ENCODE measurements at regions of chr14 and their contacts with region 1.

Region 1: GRCh38 chr14:54881235-54881760 is 21.3 kb downstream of the GCH1 start:
- DNase-seq: peak; percentile 34
- ATAC-seq: peak; percentile 71
- H3K4me3 Mint-ChIP-seq: peak overlapping the region; percentile 83
- H3K27ac Mint-ChIP-seq: peak overlapping the region; percentile 100
- H3K4me1 Mint-ChIP-seq: peaks cover 39% of the 10 kb centered on the region
- H3K27me3 Mint-ChIP-seq: no peaks in the 10 kb centered on the region

Region 2: GRCh38 chr14:54893151-54893760 is 12.0 kb after region 1 on chr14:
- CTCF ChIA-PET with region 1: interaction called, 42 read pairs
- POLR2A ChIA-PET with region 1: interaction called, 4 read pairs
- intact Hi-C with region 1: loop called (anchors 1 kb)
- DNase-seq: peak; percentile 59
- ATAC-seq: peak; percentile 77
- H3K4me3 Mint-ChIP-seq: no peak overlapping the region
- H3K27ac Mint-ChIP-seq: peak overlapping the region; percentile 13
- H3K4me1 Mint-ChIP-seq: peaks cover 57% of the 10 kb centered on the region
- H3K27me3 Mint-ChIP-seq: no peaks in the 10 kb centered on the region

Region 3: GRCh38 chr14:54902521-54903420 is 21.5 kb after region 1 on chr14 and contains the start of gene GCH1:
- CTCF ChIA-PET with region 1: interaction called, 42 read pairs
- POLR2A ChIA-PET with region 1: interaction called, 4 read pairs
- intact Hi-C with region 1: loop called (anchors 1 kb)
- DNase-seq: peak; percentile 81
- ATAC-seq: peak; percentile 80
- H3K4me3 Mint-ChIP-seq: peak within 1 kb of the TSS; percentile 88
- H3K27ac Mint-ChIP-seq: peak within 1 kb of the TSS; percentile 90
- H3K4me1 Mint-ChIP-seq: peaks cover 26% of the 10 kb centered on the region
- H3K27me3 Mint-ChIP-seq: no peaks in the 10 kb centered on the region
- total RNA-seq, gene GCH1: 28.1 to 36.4 TPM

Measured in activated CD4-positive, alpha-beta T cell treated with anti-CD3 and anti-CD28 coated beads for 36 hours (primary cell).